ENCODE measurements at regions of chr5 and their contacts with region 1.

Region 1: GRCh38 chr5:139392678-139393496 is 2.0 kb downstream of the PROB1 start:
- DNase-seq: peak; percentile 85 to 92
- ATAC-seq: peak; percentile 75 to 89
- H3K4me3 ChIP-seq: peak overlapping the region; percentile 85
- H3K27ac ChIP-seq: peak overlapping the region; percentile 89 to 92
- H3K4me1 ChIP-seq: peaks cover 44% of the 10 kb centered on the region
- CTCF ChIP-seq: peak; percentile 86
- EP300 ChIP-seq: no peak
- POLR2A ChIP-seq: no peak
- RAD21 ChIP-seq: peak; percentile 87 to 96

Region 2: DNA sequence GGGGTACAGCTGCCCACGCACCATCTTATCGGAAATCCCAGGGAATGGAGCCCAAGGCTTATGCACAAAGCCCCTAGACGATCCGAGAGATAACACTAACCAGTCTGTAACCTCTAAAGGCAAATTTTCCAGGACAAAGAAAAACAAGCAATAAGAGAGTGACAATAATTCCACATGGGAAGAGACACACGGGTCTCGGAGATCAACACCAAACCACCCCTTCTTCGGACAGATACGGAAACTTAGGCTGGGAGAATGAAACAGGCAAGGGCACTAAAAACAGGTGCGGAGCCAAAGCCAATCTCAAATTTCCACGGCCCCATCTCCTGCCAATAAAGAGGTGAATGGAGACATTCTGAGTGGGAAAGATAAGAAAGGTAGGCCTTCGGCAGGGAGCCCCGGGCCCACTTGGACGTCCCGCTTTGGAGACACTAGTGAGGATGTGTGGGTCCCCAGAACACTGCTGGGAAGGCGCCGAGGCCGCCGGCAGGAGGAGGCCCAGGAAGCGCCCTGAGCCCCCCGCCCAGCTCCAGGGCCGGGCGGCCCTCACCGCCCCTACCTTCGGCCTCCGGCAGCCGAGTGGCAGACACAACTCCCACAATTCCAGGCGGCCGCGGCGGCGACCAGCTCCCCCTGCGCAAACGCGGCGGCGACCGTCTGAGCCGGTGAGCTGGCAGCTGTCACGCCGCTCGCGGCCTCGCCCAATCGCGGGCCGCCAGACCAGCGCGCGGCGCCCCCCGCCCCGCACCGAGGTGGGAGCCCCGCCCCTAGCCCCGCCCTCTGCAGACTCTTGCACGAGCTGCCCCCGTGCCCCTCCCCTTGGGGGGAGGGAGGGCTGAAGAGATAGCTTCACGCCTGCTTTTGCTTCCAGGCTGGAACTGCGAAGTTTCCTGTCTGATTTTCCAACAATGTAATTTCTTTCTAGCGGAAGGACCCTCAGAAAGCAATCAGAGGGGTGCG is 194.9 kb before region 1 on chr5 and contains the start of gene SIL1:
- CTCF ChIA-PET with region 1: no interaction called
- POLR2A ChIA-PET with region 1: no interaction called
- DNase-seq: peak; percentile 85 to 93
- ATAC-seq: peak; percentile 98 to 99
- H3K4me3 ChIP-seq: peak within 1 kb of the TSS; percentile 83
- H3K27ac ChIP-seq: peak within 1 kb of the TSS; percentile 94 to 96
- H3K4me1 ChIP-seq: peaks cover 11% of the 10 kb centered on the region; the same call in 1 of the 3 replicates
- CTCF ChIP-seq: no peak
- EP300 ChIP-seq: no peak
- POLR2A ChIP-seq: peak; percentile 91
- RAD21 ChIP-seq: no peak
- polyA plus RNA-seq, gene SIL1: 28.5 and 45.5 TPM in 2 replicates

Region 3: GRCh38 chr5:139374909-139375308 is 18.0 kb before region 1 on chr5:
- CTCF ChIA-PET with region 1: interaction called, 10 read pairs
- POLR2A ChIA-PET with region 1: interaction called, 4 read pairs
- DNase-seq: no peak
- ATAC-seq: 0 out of 6 replicates have a peak, but pooled peaks have one; percentile 2 to 10
- H3K4me3 ChIP-seq: no peak overlapping the region
- H3K27ac ChIP-seq: peak overlapping the region; percentile 25 to 73; a peak in 4 of 6 replicates
- H3K4me1 ChIP-seq: peaks cover 29% of the 10 kb centered on the region
- CTCF ChIP-seq: no peak
- EP300 ChIP-seq: no peak
- POLR2A ChIP-seq: no peak
- RAD21 ChIP-seq: no peak

Region 4: GRCh38 chr5:139403787-139404483 is 11.0 kb after region 1 on chr5 and contains the start of gene SPATA24:
- CTCF ChIA-PET with region 1: interaction called, 16 read pairs
- POLR2A ChIA-PET with region 1: interaction called, 3 read pairs
- DNase-seq: peak; percentile 96 to 97
- ATAC-seq: peak; percentile 89 to 95
- H3K4me3 ChIP-seq: peak within 1 kb of the TSS; percentile 45
- H3K27ac ChIP-seq: peak within 1 kb of the TSS; percentile 86 to 91
- H3K4me1 ChIP-seq: peaks cover 12% of the 10 kb centered on the region
- CTCF ChIP-seq: no peak
- EP300 ChIP-seq: no peak
- POLR2A ChIP-seq: peak; percentile 36
- RAD21 ChIP-seq: no peak
- polyA plus RNA-seq, gene SPATA24: 4.5 and 5.7 TPM in 2 replicates